ENCODE measurements at regions of chr18 and their contacts with region 1.

Region 1: DNA sequence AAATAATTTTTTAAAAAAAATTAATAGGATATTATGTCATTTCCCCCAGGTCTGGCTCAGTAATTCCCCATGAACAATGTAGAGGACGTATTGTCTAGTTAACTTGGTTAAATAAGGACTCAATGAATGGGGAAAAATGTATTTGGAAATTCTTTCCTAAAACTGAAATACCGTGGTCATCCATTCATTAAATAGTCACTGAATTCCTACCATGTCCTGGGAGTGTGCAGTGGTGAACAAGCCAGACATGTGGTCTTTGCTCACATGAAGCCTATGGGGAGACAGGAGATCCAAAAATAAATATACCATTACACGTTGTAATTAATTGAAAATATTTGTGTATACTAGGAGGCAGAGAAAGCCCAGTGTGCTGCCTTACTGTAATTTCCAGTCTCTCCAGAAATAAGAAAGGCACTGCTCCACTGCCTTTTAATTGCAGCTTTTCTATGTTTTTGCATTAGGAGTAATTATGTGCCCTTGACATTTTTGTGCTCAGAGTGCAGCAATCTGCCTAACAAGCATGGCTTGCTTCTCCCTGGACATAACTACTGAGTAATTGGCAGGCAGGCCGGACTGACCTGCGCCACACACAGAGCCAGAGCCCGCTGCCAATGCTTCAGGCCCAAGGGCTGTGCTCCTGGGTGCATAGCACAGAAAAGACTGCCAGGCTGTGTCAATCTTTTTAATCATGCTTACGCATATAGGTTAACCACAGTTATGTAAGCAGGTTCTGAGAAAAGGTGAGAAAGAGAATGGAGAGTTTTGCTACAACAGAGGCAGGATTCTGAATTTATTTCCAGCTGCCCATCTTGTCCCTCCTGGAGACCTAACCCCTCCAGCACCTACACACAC is 22.2 kb upstream of the TTC39C start:
- DNase-seq: peak; percentile 57
- ATAC-seq: peak; percentile 95
- H3K4me3 Mint-ChIP-seq: no peak overlapping the region
- H3K27ac Mint-ChIP-seq: peak overlapping the region; percentile 60
- H3K4me1 Mint-ChIP-seq: peaks cover 51% of the 10 kb centered on the region
- H3K27me3 Mint-ChIP-seq: peaks cover 3% of the 10 kb centered on the region

Region 2: DNA sequence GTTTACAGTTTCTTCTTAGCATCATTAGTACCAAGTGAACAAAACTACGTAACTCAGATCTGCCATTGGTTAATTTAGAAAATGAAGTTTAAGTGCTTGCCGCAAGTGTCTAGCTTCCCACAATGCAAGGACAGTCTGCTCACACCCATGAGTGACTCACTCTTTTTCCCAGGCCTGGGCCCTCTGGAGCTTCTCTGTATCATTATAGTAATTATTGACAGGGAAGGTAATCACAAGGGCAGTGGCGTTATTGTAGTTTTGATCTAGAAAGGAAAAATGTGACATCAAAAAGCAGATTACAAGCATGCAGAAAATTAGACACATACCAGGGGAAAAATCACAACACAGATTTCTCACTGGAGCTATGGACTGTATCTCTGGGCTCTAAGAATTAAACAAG is 444.5 kb before region 1 on chr18:
- CTCF ChIA-PET with region 1: no interaction called
- POLR2A ChIA-PET with region 1: no interaction called
- intact Hi-C with region 1: no loop called
- DNase-seq: no peak
- ATAC-seq: no peak
- H3K4me3 Mint-ChIP-seq: no peak overlapping the region
- H3K27ac Mint-ChIP-seq: no peak overlapping the region
- H3K4me1 Mint-ChIP-seq: peaks cover 5% of the 10 kb centered on the region
- H3K27me3 Mint-ChIP-seq: no peaks in the 10 kb centered on the region

Region 3: GRCh38 chr18:23972416-23972815 is 19.9 kb before region 1 on chr18:
- CTCF ChIA-PET with region 1: interaction called, 3 read pairs
- POLR2A ChIA-PET with region 1: no interaction called
- intact Hi-C with region 1: loop called (anchors 1 to 2 kb)
- DNase-seq: peak; percentile 55
- ATAC-seq: peak; percentile 92
- H3K4me3 Mint-ChIP-seq: no peak overlapping the region
- H3K27ac Mint-ChIP-seq: no peak overlapping the region
- H3K4me1 Mint-ChIP-seq: peaks cover 52% of the 10 kb centered on the region
- H3K27me3 Mint-ChIP-seq: no peaks in the 10 kb centered on the region

Measured in activated CD4-positive, alpha-beta T cell treated with anti-CD3 and anti-CD28 coated beads for 36 hours (primary cell).